Breast epithelium (tissue), 4 donors: ENCODE measurements at regions of chr14 and their contacts with region 1.

Region 1: DNA sequence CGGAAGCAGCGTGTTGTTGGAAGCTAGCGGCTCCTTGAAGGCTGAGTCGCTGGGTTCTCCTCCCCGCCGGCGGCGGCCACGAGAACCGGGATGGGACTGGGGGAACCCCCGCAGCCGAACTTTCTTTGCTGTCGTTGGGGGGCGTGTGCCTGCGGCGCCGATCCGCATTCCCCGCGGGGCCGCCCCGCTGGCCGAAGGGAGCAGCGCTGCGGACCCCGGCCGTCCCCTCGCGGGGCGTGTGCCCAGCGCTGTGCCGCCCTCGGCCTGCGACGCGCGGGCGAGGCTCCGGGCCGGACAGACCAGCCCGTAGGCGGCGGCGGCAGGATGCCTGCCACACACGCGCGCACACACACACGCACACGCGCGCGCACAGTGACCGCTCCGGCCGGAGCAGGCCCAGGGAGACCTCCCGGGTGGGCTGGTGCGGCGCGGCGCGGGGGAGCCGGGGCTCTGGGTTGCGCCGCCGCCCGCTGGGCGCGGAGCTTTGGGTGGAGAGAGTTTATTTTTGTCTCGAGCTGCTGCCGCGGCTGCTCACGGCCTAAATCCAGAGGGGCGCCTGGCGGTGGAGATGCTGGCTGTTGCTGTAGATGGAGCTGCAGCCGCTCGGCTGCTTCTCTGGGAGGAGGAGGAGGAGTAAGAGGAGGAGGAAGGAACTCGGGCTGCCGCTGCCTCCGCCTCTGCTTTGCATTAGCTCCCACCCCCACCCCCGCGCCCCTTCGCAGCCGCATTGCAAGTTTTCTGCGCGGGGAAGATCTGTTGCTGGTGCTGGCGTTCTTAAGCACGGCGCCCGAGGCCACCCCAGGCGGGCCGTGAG is at the start of gene SAMD4A:
- DNase-seq: peak; percentile 68
- H3K4me3 ChIP-seq: peak within 1 kb of the TSS; percentile 70 to 91 (median 78)
- H3K27ac ChIP-seq: peak within 1 kb of the TSS; percentile 97 to 100
- H3K4me1 ChIP-seq: no peaks in the 10 kb centered on the region
- H3K27me3 ChIP-seq: no peaks in the 10 kb centered on the region
- CTCF ChIP-seq: peak in 2 of 3 donors; percentile 2 to 28
- POLR2A ChIP-seq: no peak
- total RNA-seq, gene SAMD4A: 28.5 to 44.6 (median 36.2) TPM

Region 2: DNA sequence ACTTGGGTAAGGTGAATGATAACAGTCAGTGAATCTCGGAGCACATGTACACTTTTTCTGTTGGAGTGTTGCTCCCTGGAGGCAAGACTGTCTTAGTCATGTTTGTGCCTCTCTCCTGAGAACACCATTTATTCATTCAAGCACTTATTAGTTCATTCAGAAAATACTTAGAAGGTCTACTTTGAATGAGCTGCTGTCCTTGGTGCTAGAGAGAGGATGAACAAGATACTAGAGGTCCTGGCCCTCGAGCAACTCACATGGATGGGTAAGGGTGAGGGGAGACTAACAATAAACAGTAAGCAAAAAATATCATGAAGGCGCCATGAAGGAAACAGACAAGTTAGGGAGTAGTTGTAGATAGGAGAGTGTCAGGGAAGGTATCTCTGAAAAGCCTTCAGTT is 16.8 kb before region 1 on chr14:
- intact Hi-C with region 1: no loop called
- DNase-seq: no peak
- H3K4me3 ChIP-seq: no peak overlapping the region
- H3K27ac ChIP-seq: no peak overlapping the region
- H3K4me1 ChIP-seq: no peaks in the 10 kb centered on the region
- H3K27me3 ChIP-seq: no peaks in the 10 kb centered on the region
- CTCF ChIP-seq: no peak
- POLR2A ChIP-seq: no peak

Region 3: DNA sequence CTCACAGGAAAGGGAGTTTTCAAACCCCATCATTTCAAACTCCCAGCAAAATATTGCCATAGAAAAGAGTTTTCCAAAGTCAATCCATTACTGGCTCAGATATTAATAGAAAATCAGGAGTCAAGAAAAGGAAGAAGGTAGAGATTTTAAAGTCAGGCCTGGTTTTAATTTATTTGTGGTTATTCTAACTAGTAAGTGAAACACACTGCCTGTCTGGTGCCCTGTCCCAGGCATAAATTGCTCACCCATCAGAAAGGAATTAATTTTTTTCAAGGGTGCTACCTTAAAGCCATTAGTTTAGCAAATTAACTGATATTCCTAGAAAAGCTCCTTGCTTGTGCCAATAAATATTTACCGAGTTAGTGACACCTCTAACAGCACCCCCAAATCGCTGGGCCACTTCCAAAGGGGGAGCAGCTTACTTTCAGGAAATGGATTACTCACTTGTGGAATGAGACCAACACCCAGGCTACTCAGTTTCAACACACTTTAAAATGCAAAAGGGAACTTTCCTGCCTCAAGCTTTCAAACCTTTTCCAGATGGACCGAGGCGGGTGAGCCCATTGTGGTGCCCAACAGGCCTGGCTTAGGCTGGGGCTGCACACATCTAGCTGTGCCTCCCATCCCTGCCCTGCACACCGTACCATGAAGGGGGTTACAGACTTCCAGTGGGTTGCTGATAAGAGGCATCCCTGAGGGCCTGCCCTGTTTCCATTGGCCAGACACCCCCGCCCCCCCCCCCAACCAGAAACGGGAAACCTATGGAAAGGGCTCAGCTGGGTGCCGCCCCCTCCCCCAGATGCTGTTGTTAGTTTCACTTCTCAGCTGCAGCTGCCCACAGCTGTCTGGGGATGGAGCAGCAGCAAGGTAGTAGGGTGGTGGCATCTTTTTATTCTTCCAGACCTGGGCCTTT is 117.5 kb after region 1 on chr14:
- intact Hi-C with region 1: loop called (anchors 10 kb)
- DNase-seq: no peak
- H3K4me3 ChIP-seq: no peak overlapping the region
- H3K27ac ChIP-seq: peak overlapping the region; percentile 71 to 92
- H3K4me1 ChIP-seq: no peaks in the 10 kb centered on the region
- H3K27me3 ChIP-seq: no peaks in the 10 kb centered on the region
- CTCF ChIP-seq: no peak
- POLR2A ChIP-seq: no peak

Region 4: GRCh38 chr14:54773171-54773975 is 206.8 kb after region 1 on chr14:
- intact Hi-C with region 1: loop called (anchors 5 kb)
- DNase-seq: peak; percentile 80 to 87
- H3K4me3 ChIP-seq: peak overlapping the region in 1 of 3 donors; percentile 6
- H3K27ac ChIP-seq: peak overlapping the region; percentile 84 to 90
- H3K4me1 ChIP-seq: peaks cover 0 to 4% of the 10 kb centered on the region in 2 donors
- H3K27me3 ChIP-seq: no peaks in the 10 kb centered on the region
- CTCF ChIP-seq: peak; percentile 86 to 89 (median 87)
- POLR2A ChIP-seq: no peak